ENCODE measurements at regions of chr9 and their contacts with region 1.

Region 1: GRCh38 chr9:109440797-109441287 is 57.3 kb downstream of the PTPN3 start:
- DNase-seq: peak; percentile 67
- H3K4me3 Mint-ChIP-seq: no peak overlapping the region
- H3K27ac Mint-ChIP-seq: no peak overlapping the region
- H3K4me1 Mint-ChIP-seq: peaks cover 16% of the 10 kb centered on the region
- H3K27me3 Mint-ChIP-seq: peaks cover 52% of the 10 kb centered on the region

Region 2: GRCh38 chr9:109418827-109419226 is 22.0 kb before region 1 on chr9:
- CTCF ChIA-PET with region 1: interaction called, 10 read pairs
- DNase-seq: no peak
- H3K4me3 Mint-ChIP-seq: no peak overlapping the region
- H3K27ac Mint-ChIP-seq: no peak overlapping the region
- H3K4me1 Mint-ChIP-seq: peaks cover 4% of the 10 kb centered on the region
- H3K27me3 Mint-ChIP-seq: peaks cover 29% of the 10 kb centered on the region

Region 3: GRCh38 chr9:109459423-109459822 is 18.6 kb after region 1 on chr9:
- CTCF ChIA-PET with region 1: interaction called, 189 read pairs
- DNase-seq: no peak
- H3K4me3 Mint-ChIP-seq: no peak overlapping the region
- H3K27ac Mint-ChIP-seq: no peak overlapping the region
- H3K4me1 Mint-ChIP-seq: peaks cover 4% of the 10 kb centered on the region
- H3K27me3 Mint-ChIP-seq: peaks cover 36% of the 10 kb centered on the region

Region 4: DNA sequence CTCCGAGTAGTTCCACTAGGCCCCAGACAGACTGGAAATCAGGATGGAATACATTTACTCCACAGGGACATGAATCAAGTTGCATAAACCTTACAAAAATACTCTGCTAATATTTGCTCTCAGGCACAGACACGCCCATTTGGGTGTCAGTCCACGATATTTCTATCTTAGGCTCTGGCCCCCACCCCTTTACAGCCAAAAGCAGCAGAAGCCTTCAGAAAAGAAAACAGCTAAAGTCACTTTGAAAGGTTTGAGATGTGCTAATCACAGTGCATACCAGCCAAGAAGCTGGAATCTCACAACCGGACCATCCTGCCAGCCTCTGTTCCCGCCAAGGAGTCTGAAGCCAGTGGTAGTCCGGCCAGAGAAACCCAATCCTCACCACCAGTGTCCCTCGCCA is 34.7 kb after region 1 on chr9:
- CTCF ChIA-PET with region 1: interaction called, 189 read pairs
- DNase-seq: no peak
- H3K4me3 Mint-ChIP-seq: no peak overlapping the region
- H3K27ac Mint-ChIP-seq: no peak overlapping the region
- H3K4me1 Mint-ChIP-seq: no peaks in the 10 kb centered on the region
- H3K27me3 Mint-ChIP-seq: peaks cover 18% of the 10 kb centered on the region

Region 5: GRCh38 chr9:109950710-109951443 is 510.0 kb after region 1 on chr9:
- CTCF ChIA-PET with region 1: no interaction called
- DNase-seq: peak; percentile 43
- H3K4me3 Mint-ChIP-seq: no peak overlapping the region
- H3K27ac Mint-ChIP-seq: peak overlapping the region; percentile 70
- H3K4me1 Mint-ChIP-seq: peaks cover 28% of the 10 kb centered on the region
- H3K27me3 Mint-ChIP-seq: no peaks in the 10 kb centered on the region

Measured in activated naive CD4-positive, alpha-beta T cell treated with anti-CD3 and anti-CD28 coated beads, Interleukin-2, amount 10 ng/mL, durations not matched to agents 7 days and 5 days (primary cell).